Activated B cell treated with CpG ODN at 0.5 μM for 24 hours (primary cell): ENCODE measurements at regions of chr10 and their contacts with region 1.

Region 1: DNA sequence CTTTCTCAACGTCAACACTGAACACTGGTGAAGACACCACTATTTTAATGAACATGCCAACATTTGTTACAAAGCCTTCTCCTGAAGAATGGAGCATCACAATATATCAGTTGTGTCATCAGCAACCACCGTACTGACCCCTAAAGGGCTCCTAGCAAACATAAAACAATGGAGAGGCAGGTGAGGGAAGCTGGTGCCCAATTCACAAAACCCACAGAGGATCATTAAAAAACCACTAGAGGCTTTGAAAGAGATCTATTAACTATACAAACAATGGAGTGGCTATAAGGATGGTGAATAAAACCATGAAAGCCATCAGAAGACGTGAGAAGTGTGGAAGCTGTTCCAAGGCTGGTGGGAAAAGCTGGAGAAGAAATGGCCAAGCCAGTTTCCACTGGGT is 150.8 kb downstream of the FAM107B start:
- DNase-seq: no peak
- ATAC-seq: no peak
- H3K4me3 Mint-ChIP-seq: no peak overlapping the region
- H3K27ac Mint-ChIP-seq: no peak overlapping the region
- H3K4me1 Mint-ChIP-seq: peaks cover 6% of the 10 kb centered on the region
- H3K27me3 Mint-ChIP-seq: no peaks in the 10 kb centered on the region
- CTCF ChIP-seq: no peak

Region 2: DNA sequence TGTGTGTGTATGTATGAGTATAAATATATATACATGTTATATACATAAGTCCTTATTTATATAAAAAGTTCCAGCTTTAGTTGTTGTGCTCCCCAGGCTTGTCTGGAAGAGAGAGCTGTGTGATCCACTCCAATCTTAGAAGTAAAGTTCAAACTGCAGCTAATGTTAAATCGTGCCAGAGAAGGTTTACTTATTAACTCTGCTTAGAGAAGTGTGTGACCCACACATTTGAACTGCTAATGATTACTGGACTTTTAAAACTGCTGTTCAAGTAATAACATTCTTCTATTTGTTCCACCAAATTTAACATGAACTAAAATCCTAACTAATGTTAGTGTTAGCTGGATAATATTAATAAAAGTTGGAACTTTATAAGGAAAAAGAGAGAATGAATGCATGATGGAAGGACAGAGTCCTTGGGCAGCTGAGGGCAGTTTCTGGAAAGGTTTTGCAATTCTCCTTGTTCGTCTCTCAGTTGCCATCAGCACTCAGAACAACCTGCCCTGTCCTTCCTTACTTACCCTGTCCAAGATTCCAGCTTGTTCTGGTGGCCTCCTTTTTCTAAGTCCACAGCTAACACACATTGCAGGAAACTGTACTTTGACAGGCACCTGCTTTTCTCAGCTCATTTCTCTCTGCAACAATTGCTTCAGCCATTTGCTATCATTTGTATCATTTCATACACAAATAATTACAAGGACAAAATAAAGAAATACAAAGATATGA is 11.8 kb before region 1 on chr10:
- CTCF ChIA-PET with region 1: no interaction called
- POLR2A ChIA-PET with region 1: interaction called, 9 read pairs
- intact Hi-C with region 1: loop called (anchors 1 kb)
- DNase-seq: no peak
- ATAC-seq: no peak
- H3K4me3 Mint-ChIP-seq: no peak overlapping the region
- H3K27ac Mint-ChIP-seq: no peak overlapping the region
- H3K4me1 Mint-ChIP-seq: peaks cover 56% of the 10 kb centered on the region
- H3K27me3 Mint-ChIP-seq: no peaks in the 10 kb centered on the region
- CTCF ChIP-seq: no peak